Activated CD8-positive, alpha-beta memory T cell treated with anti-CD3 and anti-CD28 coated beads, Interleukin-2, amount 10 ng/mL, durations not matched to agents 7 days and 5 days (primary cell): ENCODE measurements at regions of chr20 and their contacts with region 1.

Region 1: GRCh38 chr20:45322952-45323383 is 14.9 kb upstream of the MATN4 start:
- DNase-seq: no peak
- ATAC-seq: no peak
- H3K4me3 Mint-ChIP-seq: no peak overlapping the region
- H3K27ac Mint-ChIP-seq: no peak overlapping the region
- H3K4me1 Mint-ChIP-seq: peaks cover 35% of the 10 kb centered on the region
- H3K27me3 Mint-ChIP-seq: no peaks in the 10 kb centered on the region

Region 2: DNA sequence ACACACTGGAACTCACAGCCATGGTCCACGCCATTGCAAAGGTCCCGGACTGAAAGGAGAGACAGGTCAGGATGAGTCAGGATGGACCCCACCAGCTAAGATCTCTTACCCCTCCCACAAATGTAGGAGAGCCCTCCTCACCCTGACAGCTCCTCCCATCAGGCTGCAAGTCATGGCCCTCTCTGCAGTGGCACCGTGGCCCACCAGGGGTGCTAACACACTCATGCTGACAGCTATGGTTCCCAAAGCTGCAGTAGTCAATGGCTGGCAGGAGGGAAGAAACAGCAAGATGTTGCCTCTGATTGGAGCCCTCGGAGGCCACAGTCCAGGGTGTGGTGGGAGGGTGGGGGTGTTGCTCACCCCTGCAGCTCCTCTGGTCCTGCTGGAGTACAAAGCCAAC is 22.0 kb before region 1 on chr20:
- CTCF ChIA-PET with region 1: interaction called, 45 read pairs
- DNase-seq: peak; percentile 75
- ATAC-seq: peak; percentile 69
- H3K4me3 Mint-ChIP-seq: no peak overlapping the region
- H3K27ac Mint-ChIP-seq: no peak overlapping the region
- H3K4me1 Mint-ChIP-seq: peaks cover 42% of the 10 kb centered on the region
- H3K27me3 Mint-ChIP-seq: peaks cover 29% of the 10 kb centered on the region

Region 3: GRCh38 chr20:45337367-45338120 is 14.6 kb after region 1 on chr20:
- CTCF ChIA-PET with region 1: interaction called, 15 read pairs
- DNase-seq: no peak
- ATAC-seq: no peak
- H3K4me3 Mint-ChIP-seq: no peak overlapping the region
- H3K27ac Mint-ChIP-seq: no peak overlapping the region
- H3K4me1 Mint-ChIP-seq: peaks cover 7% of the 10 kb centered on the region
- H3K27me3 Mint-ChIP-seq: no peaks in the 10 kb centered on the region

Region 4: DNA sequence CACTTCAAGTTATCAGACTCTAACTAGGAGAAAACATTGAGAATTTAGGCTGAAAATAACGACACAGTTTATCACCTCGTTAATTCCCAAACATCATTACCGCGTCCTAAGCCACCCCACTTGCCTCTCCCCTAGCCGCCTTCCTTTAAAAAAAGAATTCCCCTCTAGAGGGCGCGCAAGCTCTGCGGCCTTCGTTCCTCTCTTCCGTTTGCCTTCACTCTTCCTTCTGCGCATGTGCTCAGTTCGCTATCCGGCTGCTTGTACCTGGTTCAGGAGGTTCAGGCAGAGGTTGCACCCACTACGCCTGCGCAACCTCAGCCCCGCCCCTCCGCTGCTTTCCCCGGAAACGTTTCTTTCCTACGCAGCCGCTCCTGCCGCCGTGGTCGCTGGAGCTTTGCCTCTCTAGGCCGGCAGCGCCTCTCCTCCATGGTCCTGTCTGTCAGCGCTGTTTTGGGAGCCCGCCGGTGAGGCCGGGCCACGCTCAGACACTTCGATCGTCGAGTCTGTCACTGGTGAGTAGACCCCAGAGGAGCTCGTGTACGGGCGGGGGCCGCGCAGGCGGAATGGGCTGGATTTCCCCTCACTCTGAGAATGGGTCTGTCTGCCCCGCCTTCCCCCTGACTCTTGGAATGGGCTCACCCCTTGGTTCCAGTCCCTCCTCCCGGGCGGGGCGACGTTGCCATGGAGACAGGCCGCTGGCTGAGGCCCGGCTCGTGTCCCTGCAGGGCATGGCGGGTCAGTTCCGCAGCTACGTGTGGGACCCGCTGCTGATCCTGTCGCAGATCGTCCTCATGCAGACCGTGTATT is 40.0 kb after region 1 on chr20 and contains the start of gene SYS1:
- CTCF ChIA-PET with region 1: interaction called, 120 read pairs
- DNase-seq: peak; percentile 99
- ATAC-seq: peak; percentile 92
- H3K4me3 Mint-ChIP-seq: peak within 1 kb of the TSS; percentile 100
- H3K27ac Mint-ChIP-seq: peak within 1 kb of the TSS; percentile 97
- H3K4me1 Mint-ChIP-seq: peaks cover 52% of the 10 kb centered on the region
- H3K27me3 Mint-ChIP-seq: peaks cover 3% of the 10 kb centered on the region
- total RNA-seq, gene SYS1: 19.6 to 24.9 TPM

Region 5: DNA sequence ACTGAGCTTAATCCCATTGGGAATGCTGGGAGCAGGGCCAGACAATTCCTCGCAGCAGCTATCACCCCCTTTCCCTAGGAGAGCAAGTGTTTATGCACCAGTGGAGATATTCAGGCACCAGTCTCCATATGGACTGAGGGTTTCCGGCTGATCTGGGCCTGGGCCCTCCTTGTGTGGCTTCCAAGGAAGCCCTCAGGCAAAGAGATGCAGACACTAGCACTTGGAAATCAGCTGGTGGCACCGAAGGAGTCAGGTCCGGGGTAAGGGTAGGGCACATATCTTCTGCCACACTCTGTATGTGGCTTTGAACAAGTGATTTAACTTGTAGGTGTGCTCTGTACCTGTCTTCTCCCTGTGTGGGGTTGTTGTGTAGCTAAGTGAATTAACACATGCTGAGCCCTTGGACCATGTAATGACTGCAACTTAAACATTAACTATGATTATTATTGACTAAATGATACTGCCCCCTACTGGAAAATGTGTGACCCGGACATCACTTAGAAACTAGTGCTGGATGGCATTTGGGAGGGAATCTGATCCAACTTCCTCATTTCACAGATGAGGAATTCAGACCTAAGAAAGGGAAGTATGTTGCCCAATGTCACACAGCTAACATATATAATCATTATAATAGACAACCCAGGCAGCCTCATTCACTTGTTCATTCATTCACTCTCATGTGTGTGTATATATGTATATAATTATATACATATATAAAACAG is 127.3 kb after region 1 on chr20:
- CTCF ChIA-PET with region 1: interaction called, 62 read pairs
- DNase-seq: no peak
- ATAC-seq: peak; percentile 34
- H3K4me3 Mint-ChIP-seq: no peak overlapping the region
- H3K27ac Mint-ChIP-seq: no peak overlapping the region
- H3K4me1 Mint-ChIP-seq: peaks cover 15% of the 10 kb centered on the region
- H3K27me3 Mint-ChIP-seq: peaks cover 8% of the 10 kb centered on the region